Posterior vena cava (tissue), 2 donors: ENCODE measurements at regions of chr4 and their contacts with region 1.

Region 1: DNA sequence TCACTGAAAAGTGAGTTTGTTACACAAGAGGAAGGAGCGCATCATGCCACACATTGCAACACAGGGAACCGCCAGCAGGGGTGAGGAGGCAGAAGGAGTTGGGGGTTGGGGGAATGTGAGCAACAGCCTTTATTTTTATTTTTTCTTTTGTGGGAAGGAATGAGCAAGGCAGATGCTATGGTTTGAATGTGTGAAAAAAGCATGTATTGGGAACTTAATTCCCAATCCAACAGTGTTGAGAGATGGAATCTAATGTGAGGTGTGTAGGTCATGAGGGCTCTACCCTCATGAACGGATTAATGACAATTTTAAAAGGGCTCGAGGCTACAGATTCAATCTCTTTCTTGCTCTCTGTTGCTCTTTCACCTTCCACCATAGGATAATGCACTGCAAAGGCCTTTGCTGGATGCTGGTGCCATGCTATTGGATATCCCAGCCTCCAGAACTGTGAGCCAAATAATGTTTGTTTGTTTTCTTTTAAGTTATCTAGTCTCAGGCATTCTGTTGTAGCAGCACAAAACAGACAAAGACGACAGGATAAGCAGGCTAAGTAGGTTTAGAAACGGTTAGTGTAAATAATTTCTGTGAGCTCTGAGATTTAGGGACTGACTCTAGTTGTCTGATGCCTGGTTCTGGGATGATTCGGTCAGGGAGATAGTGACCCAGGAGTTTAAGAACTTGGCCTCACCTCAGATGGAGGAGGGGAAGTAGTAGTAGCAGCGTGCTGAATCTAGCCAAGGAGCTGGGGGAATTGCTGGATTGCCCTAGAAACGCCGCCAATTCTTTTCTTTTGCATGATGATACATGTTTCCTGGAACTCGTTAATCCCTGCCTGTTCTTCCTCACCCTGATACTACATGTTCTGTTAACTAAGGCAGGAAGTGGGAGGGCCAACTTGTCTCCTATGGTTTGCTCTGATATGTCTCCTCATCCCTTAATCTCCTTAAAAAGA is 156.6 kb upstream of the CTSO start:
- DNase-seq: no peak

Region 2: GRCh38 chr4:155468282-155468681 is 641.9 kb before region 1 on chr4:
- intact Hi-C with region 1: no loop called
- DNase-seq: no peak

Region 3: GRCh38 chr4:155822572-155822971 is 287.7 kb before region 1 on chr4:
- intact Hi-C with region 1: loop called in 1 of 2 experiments (anchors 5 kb)
- DNase-seq: no peak

Region 4: DNA sequence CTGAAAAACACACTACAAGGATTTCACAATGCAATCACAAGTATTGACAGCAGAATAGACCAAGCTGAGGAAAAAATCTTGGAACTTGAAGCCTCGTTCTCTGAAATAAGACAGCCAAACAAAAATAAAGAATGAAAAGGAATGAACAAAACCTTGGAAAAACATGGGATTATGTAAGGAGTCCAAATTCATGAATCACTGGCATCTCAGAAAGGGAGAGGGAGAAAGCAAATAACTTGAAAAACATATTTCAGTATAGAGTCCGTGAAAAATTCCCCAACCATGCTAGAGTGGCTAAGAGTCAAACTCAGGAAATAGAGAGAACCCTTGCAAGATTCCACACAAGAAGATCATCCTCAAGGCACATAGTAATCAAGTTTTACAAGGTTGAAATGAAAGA is 22.0 kb after region 1 on chr4:
- intact Hi-C with region 1: no loop called
- DNase-seq: no peak